OCI-LY7 (cell line): ENCODE measurements at regions of chr18 and their contacts with region 1.

Region 1: GRCh38 chr18:31954349-31954748 is 11.4 kb upstream of the TRAPPC8 start:
- DNase-seq: no peak
- H3K4me3 ChIP-seq: no peak overlapping the region
- H3K27ac ChIP-seq: no peak overlapping the region
- H3K4me1 ChIP-seq: no peaks in the 10 kb centered on the region
- CTCF ChIP-seq: no peak

Region 2: DNA sequence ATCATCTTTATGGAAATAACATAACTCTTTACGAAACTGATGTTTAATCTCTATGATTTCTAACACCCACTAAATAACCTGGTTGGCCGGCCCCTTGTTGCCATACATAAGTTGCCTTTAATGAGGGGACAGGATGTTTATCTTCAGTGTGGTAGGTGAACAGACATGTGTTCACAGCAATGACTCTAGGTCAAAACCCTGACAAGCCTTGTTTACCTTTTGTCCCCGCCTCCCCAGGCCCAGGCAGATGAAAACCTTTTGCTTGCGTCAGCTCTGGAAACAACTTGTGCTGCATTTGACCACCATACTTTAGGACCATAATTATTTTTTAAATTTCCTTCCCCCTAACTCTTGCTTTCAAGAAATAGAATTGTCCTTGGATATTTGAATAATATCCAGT is 580.7 kb before region 1 on chr18:
- CTCF ChIA-PET with region 1: no interaction called
- POLR2A ChIA-PET with region 1: no interaction called
- intact Hi-C with region 1: no loop called
- DNase-seq: no peak
- H3K4me3 ChIP-seq: no peak overlapping the region
- H3K27ac ChIP-seq: no peak overlapping the region
- H3K4me1 ChIP-seq: no peaks in the 10 kb centered on the region
- CTCF ChIP-seq: no peak

Region 3: DNA sequence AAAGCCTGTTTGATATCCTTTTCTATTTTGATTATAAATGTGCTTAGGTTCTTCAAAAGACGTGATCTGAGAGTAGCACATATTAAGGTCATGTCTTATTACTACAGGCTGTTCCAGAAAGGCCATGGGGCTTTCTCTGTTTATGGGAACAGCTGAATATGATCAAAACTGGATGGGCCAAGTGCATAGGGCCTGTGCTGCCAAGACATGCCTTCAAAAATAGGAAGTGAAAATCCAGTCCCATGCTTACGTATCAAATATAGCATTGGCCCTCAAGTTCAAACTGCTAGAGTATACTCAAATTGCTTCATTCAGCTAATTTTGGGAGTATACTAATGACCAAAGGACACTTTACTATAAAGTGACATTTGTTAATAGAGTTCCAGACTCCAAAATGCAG is 217.7 kb before region 1 on chr18:
- CTCF ChIA-PET with region 1: no interaction called
- POLR2A ChIA-PET with region 1: no interaction called
- intact Hi-C with region 1: loop called (anchors 10 kb)
- DNase-seq: peak; percentile 6
- H3K4me3 ChIP-seq: no peak overlapping the region
- H3K27ac ChIP-seq: no peak overlapping the region
- H3K4me1 ChIP-seq: peaks cover 14% of the 10 kb centered on the region
- CTCF ChIP-seq: no peak

Region 4: DNA sequence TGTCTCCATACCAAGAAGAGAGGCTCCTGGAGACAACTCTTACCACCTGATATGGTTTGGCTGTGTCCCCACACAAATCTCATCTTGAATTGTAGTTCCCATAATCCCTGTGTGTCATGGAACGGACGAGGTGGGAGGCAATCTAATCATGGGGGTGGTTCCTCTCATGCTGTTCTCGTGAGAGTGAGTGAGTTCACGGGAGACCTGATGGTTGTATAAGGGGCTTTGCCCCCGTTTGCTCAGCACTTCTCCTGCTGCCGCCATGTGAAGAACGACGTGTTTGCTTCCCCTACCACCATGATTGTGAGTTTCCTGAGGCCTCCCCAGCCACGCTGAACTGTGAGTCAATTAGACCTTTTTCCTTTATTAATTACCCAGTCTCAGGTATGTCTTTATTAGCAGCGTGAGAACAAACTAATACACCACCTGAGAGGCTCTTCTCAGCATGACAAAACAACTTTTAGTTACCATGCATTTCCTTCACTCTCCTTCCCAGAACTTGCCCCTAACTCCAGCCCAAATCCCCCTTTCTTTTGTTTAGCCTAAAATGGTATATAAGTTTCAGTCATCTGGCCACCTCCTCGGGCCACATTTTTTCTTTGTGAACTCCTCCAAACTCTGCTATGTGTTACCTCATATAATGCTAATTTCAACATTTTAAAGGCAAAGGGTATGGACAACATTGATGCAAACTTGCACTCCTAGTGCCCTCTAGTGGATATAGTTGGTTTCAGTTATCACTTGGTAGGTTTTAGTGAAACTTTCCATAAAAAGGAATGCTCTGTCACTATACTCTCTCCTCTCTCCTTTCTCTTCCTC is 135.0 kb before region 1 on chr18:
- CTCF ChIA-PET with region 1: no interaction called
- POLR2A ChIA-PET with region 1: no interaction called
- intact Hi-C with region 1: loop called (anchors 10 kb)
- DNase-seq: peak; percentile 50
- H3K4me3 ChIP-seq: no peak overlapping the region
- H3K27ac ChIP-seq: no peak overlapping the region
- H3K4me1 ChIP-seq: no peaks in the 10 kb centered on the region
- CTCF ChIP-seq: peak; percentile 81